ENCODE measurements at regions of chr1 and their contacts with region 1.

Region 1: GRCh38 chr1:2300851-2301606 is 72.9 kb downstream of the SKI start:
- DNase-seq: peak; percentile 86
- ATAC-seq: peak; percentile 82
- H3K4me3 Mint-ChIP-seq: peak overlapping the region; percentile 85
- H3K27ac Mint-ChIP-seq: peak overlapping the region; percentile 97
- H3K4me1 Mint-ChIP-seq: peaks cover 65% of the 10 kb centered on the region
- H3K27me3 Mint-ChIP-seq: no peaks in the 10 kb centered on the region
- CTCF ChIP-seq: no peak

Region 2: DNA sequence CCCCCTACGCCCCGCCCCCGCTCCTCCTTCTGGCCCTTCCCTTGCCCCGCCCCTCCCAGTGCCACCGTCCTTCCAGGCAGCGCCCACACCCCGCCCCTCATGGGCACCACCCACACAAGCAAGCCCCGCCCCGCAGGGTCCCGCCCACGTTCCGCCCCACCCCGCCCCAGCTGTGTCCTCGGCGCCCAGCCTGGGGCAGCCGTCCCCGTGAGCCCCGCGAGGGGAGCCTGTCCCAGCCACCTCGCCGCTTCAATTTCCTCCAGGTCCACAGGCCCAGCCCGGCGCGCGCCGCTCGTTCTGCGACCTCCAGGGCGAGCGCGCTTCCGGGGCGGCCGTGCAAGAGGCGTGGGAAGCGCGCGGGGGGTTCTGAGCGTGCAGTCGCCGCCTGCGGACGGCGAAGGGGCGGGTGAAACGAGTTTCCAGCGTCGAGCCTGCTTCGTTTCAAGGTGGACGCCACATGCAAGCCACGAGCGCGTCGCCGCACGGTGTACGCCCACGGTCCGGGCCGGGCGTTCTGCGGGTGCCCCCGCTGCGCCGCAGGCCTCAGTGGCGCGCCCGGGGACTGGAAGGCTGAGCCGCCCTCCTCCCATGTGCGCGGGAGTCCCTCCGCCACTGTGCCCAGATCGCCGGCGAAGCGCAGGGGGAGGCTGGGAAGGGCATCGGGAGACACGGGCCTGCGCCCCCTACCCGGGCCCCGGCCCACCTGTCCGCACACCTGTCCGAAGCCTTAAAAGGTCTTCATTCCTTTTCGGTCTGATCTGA is 95.7 kb before region 1 on chr1:
- CTCF ChIA-PET with region 1: no interaction called
- POLR2A ChIA-PET with region 1: interaction called, 12 read pairs
- intact Hi-C with region 1: loop called (anchors 1 kb)
- DNase-seq: peak; percentile 86
- ATAC-seq: peak; percentile 93
- H3K4me3 Mint-ChIP-seq: peak overlapping the region; percentile 72
- H3K27ac Mint-ChIP-seq: no peak overlapping the region
- H3K4me1 Mint-ChIP-seq: peaks cover 29% of the 10 kb centered on the region
- H3K27me3 Mint-ChIP-seq: no peaks in the 10 kb centered on the region
- CTCF ChIP-seq: no peak

Region 3: GRCh38 chr1:2242814-2243725 is 58.0 kb before region 1 on chr1:
- CTCF ChIA-PET with region 1: no interaction called
- POLR2A ChIA-PET with region 1: interaction called, 4 read pairs
- intact Hi-C with region 1: loop called (anchors 1 kb)
- DNase-seq: no peak
- ATAC-seq: no peak
- H3K4me3 Mint-ChIP-seq: no peak overlapping the region
- H3K27ac Mint-ChIP-seq: no peak overlapping the region
- H3K4me1 Mint-ChIP-seq: peaks cover 69% of the 10 kb centered on the region
- H3K27me3 Mint-ChIP-seq: no peaks in the 10 kb centered on the region
- CTCF ChIP-seq: no peak

Region 4: GRCh38 chr1:2290595-2291510 is 10.2 kb before region 1 on chr1:
- CTCF ChIA-PET with region 1: interaction called, 14 read pairs
- POLR2A ChIA-PET with region 1: interaction called, 42 read pairs
- intact Hi-C with region 1: loop called (anchors 1 kb)
- DNase-seq: peak; percentile 62
- ATAC-seq: peak; percentile 77
- H3K4me3 Mint-ChIP-seq: peak overlapping the region; percentile 79
- H3K27ac Mint-ChIP-seq: peak overlapping the region; percentile 71
- H3K4me1 Mint-ChIP-seq: peaks cover 78% of the 10 kb centered on the region
- H3K27me3 Mint-ChIP-seq: no peaks in the 10 kb centered on the region
- CTCF ChIP-seq: no peak

Region 5: DNA sequence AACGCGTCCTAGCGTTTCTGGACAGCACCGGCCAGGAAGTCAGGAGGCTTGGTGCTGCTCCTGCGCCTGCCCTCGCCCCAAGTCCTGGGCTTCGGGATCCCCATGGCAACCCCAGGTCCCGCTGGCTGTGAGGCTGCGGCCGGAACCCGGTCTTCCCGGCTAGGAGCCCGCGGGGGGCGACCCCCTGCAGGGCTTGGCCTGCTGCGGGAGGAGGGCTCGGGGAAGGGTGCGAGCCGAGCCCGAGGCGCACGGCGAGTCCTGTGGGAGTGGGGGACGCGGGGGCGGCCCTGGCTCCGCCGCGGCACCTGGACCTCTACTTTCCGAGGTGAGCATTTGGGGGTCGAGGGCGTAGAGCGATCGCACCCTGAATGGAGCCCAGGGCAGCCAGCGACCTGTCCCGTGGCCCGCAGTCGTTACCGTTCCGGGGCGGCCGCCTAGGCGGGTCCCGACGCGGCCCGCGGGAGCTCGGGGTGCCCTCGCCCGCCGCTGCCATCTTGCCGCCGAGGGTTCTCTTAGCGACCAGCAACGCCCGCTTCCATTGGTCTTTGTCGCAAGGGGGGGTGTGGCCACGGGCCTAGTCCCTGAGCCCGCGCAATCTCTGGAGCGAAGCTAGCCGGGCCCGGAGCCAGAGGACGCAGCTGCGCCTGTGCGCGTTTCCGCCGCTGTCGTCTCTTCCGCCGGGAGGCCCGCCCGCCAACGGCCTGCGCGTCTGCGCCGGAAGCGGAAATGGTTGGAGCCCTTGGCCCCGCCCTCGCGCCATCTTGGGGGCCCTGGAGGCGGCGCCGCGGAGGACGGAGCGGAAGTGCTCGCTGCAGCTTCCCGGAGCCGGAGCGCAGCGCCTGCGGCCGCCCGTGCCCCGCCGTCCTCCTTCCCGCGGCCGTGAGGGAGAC is 90.3 kb after region 1 on chr1 and contains the starts of genes MORN1 and RER1:
- CTCF ChIA-PET with region 1: no interaction called
- POLR2A ChIA-PET with region 1: interaction called, 14 read pairs
- intact Hi-C with region 1: loop called (anchors 2 kb)
- DNase-seq: peak; percentile 96
- ATAC-seq: peak; percentile 94
- H3K4me3 Mint-ChIP-seq: peak within 1 kb of the TSS; percentile 88
- H3K27ac Mint-ChIP-seq: peak within 1 kb of the TSS; percentile 68
- H3K4me1 Mint-ChIP-seq: peaks cover 52% of the 10 kb centered on the region
- H3K27me3 Mint-ChIP-seq: no peaks in the 10 kb centered on the region
- CTCF ChIP-seq: no peak
- total RNA-seq, gene MORN1: 15.6 and 17.8 TPM in 2 replicates
- total RNA-seq, gene RER1: 102 and 105 TPM in 2 replicates

Region 6: DNA sequence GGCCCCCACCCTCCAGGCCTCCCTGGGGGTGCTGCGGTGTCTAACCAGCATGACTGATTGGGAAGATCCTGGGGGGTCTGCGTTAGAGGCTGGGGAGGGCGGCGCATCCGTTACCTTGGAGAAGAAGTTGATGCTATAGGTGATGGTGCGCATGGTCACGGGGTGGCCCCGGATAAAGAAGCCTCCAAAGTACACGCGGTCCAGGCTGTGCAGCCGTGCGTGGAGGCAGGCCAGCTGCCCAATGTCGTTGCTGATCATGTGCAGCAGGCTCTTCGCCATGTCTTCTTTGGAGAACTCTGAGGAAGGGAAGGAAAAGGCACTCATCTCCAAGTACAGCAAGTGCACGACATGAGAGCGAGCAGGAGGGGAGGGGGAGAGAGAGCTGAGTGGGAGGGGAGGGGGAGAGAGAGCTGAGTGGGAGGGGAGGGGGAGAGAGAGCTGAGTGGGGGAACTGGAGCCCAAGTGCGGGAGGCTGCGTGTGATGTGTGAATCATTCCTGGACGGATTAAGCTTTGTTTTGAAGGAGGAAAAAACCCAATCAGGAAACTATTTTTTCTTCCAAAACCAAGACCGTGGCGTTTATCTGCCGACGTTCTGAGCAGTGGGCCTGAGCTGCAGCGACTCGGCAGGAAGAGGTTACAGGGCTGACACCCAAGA is 218.1 kb after region 1 on chr1:
- CTCF ChIA-PET with region 1: no interaction called
- POLR2A ChIA-PET with region 1: no interaction called
- intact Hi-C with region 1: no loop called
- DNase-seq: no peak
- ATAC-seq: no peak
- H3K4me3 Mint-ChIP-seq: no peak overlapping the region
- H3K27ac Mint-ChIP-seq: no peak overlapping the region
- H3K4me1 Mint-ChIP-seq: peaks cover 12% of the 10 kb centered on the region
- H3K27me3 Mint-ChIP-seq: no peaks in the 10 kb centered on the region
- CTCF ChIP-seq: no peak

Region 7: DNA sequence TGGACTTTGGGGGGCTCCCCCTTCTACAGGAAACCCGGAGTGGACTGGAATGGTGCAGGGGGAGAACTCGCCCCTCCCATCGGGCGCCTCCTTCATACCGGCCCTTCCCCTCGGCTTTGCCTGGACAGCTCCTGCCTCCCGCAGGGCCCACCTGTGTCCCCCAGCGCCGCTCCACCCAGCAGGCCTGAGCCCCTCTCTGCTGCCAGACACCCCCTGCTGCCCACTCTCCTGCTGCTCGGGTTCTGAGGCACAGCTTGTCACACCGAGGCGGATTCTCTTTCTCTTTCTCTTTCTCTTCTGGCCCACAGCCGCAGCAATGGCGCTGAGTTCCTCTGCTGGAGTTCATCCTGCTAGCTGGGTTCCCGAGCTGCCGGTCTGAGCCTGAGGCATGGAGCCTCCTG is 255.2 kb after region 1 on chr1 and contains the start of gene TNFRSF14:
- CTCF ChIA-PET with region 1: no interaction called
- POLR2A ChIA-PET with region 1: no interaction called
- intact Hi-C with region 1: no loop called
- DNase-seq: peak; percentile 62
- ATAC-seq: peak; percentile 61
- H3K4me3 Mint-ChIP-seq: peak within 1 kb of the TSS; percentile 95
- H3K27ac Mint-ChIP-seq: peak within 1 kb of the TSS; percentile 96
- H3K4me1 Mint-ChIP-seq: peaks cover 48% of the 10 kb centered on the region
- H3K27me3 Mint-ChIP-seq: no peaks in the 10 kb centered on the region
- CTCF ChIP-seq: no peak
- total RNA-seq, gene TNFRSF14: 140 and 148 TPM in 2 replicates